ENCODE measurements at regions of chr1 and their contacts with region 1.

Region 1: DNA sequence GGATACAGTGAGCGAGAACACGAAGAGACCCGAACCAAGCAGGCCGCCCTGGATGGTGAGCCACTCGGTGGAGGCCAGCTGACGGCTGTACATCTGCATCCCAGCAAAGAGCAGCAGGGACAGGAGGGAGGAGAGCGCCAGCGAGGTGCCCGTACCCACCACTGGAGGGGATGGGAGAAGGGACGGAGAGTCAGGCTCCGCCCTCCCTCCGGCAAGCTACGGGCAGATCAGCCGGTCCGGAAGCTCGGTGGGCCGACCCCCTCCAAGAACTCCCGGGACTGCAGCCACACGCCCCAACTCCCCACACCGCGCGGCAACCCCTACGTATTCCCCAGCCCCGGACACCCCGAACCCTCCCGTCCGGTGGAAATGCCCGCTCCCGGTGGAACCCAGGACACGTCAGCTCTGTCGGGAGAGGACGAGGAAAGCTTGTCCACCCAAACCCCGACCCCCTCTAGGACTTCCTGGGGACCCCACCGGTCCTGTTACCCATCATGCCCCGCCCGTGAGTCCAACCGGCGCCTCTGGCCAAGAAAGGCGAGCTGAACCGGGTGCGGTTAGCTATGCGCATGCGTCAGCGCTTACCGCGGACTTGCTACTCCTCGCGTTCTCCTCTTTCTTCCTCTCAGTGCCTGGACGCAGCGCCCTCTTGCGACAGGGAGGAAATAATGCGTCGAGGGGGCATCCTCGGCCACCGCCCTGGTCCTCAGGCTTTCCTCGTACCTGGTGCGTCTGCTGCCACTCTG is at the start of gene KRTCAP2:
- DNase-seq: peak; percentile 95 to 97 (median 96)
- H3K4me3 ChIP-seq: peak within 1 kb of the TSS; percentile 77 to 95 (median 88)
- H3K27ac ChIP-seq: peak within 1 kb of the TSS; percentile 84 to 93
- H3K4me1 ChIP-seq: peaks cover 0 to 47% (median 41%) of the 10 kb centered on the region in 4 experiments
- H3K27me3 ChIP-seq: no peaks in the 10 kb centered on the region

Region 2: DNA sequence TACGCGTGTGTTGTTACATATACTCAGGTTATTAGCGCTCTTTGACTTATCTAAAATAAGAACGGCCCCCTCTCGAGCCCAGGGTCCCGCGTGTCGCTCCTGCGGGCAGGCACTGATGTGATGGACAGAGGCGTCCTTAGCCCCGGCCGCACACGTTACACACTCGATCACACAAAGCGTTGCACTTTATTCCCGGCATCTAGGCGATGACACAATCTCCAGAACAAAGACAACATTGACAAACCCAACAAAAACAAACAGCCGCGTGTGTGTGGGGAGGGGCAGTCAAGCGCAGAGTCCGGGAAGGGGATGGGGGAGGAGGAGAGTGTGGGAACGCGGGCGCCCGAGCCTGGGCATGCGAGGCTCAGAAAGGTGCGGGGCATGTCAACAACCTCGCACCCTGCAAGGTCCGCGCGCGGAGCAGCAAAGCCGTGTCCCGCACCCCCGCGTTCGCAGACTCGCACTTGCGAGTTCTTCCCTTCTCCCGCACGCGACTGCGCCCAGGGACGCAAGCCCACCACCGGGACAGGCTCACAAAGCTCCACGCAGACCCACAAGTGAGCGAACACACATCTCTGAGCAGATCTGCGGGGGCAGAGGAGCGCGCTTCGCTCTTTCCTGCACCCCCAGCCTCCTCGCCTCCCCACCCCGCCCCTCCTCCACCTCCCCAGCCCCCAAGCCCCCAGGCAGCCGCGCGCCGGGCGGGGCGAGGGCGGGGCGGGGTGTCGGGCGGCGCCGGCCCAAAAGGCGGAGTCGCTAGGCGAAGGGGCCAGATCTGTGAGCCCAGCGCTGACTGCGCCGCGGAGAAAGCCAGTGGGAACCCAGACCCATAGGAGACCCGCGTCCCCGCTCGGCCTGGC is 45.6 kb before region 1 on chr1 and contains the start of gene EFNA1:
- CTCF ChIA-PET with region 1: interaction called, 52 read pairs
- POLR2A ChIA-PET with region 1: interaction called, 8 read pairs
- DNase-seq: peak in 2 of 3 donors; percentile 42 to 56
- H3K4me3 ChIP-seq: peak within 1 kb of the TSS; percentile 47 to 89 (median 82)
- H3K27ac ChIP-seq: peak within 1 kb of the TSS in 1 of 2 experiments; percentile 78
- H3K4me1 ChIP-seq: peaks cover 9 to 54% (median 49%) of the 10 kb centered on the region in 4 experiments
- H3K27me3 ChIP-seq: peaks cover 0 to 9% (median 3%) of the 10 kb centered on the region in 5 experiments

Region 3: DNA sequence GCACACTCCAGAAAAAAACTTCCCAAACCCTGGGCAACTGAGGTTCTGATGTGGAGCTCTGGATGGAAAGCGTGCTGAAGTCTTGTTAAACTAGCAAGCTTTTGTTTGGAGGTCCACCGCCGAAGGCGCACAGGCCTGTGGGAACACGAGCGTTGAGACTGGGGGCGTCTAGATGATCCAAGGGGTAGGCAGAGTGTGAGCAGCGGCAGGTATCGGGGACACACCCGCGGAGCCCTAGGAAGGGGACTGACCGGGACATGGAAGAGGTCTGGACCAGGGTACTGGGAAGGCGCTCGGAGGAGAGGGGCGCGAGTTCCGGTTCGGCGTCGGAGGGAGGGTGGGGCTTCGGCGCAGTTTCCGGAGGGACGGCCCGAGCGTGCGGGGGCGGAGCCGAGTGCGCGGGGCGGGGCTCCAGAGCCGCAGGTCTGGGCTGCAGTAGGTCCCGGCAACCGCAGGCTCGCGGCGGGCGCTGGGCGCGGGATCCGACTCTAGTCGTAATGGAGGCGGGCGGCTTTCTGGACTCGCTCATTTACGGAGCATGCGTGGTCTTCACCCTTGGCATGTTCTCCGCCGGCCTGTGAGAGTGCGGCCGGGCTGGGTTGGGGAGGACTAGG is 37.4 kb before region 1 on chr1 and contains the start of gene SLC50A1:
- CTCF ChIA-PET with region 1: interaction called, 52 read pairs
- POLR2A ChIA-PET with region 1: interaction called, 8 read pairs
- DNase-seq: peak; percentile 95 to 96 (median 96)
- H3K4me3 ChIP-seq: peak within 1 kb of the TSS; percentile 47 to 89 (median 76)
- H3K27ac ChIP-seq: peak within 1 kb of the TSS; percentile 97 to 98
- H3K4me1 ChIP-seq: peaks cover 16 to 51% (median 45%) of the 10 kb centered on the region in 4 experiments
- H3K27me3 ChIP-seq: no peaks in the 10 kb centered on the region

Region 4: DNA sequence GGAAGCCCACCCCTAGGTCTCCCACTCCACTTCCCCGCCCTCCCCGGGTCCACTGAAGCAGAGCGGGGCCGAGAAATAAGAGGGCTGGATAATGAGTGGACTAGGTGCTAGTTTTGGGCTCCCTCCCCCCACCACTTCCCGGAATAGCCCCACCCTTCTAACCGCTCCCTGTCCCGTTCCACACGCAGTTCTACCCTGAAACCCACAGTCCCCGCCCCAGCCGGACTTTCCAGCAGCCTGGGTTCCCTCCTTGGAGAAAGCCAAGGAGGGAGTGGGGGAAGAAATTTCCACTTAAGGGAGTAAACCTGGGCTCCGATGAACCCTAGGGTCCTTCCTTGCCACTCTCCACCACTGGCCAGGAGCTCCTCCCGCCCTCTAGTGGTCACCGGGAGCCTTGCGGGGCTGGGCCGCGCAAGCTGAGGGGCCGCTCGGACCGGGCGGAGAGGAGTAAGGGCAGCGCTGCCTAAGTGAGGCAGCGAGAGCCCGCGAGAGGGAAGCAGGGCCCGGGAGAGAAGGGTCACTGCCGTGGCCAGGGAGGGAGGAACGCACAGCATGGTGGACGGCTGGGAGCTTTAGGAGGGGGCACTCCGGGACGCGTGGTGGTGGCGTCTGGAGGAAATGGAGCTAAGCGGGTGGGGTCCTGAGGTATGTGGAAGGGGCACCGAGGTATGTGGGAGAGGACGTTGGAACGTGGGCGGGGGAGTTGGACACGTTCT is 20.5 kb after region 1 on chr1:
- CTCF ChIA-PET with region 1: interaction called, 130 read pairs
- POLR2A ChIA-PET with region 1: interaction called, 8 read pairs
- DNase-seq: peak; percentile 79 to 84 (median 81)
- H3K4me3 ChIP-seq: peak overlapping the region; percentile 51 to 86 (median 74)
- H3K27ac ChIP-seq: peak overlapping the region; percentile 66 to 84
- H3K4me1 ChIP-seq: peaks cover 0 to 35% (median 32%) of the 10 kb centered on the region in 4 experiments
- H3K27me3 ChIP-seq: no peaks in the 10 kb centered on the region

Region 5: DNA sequence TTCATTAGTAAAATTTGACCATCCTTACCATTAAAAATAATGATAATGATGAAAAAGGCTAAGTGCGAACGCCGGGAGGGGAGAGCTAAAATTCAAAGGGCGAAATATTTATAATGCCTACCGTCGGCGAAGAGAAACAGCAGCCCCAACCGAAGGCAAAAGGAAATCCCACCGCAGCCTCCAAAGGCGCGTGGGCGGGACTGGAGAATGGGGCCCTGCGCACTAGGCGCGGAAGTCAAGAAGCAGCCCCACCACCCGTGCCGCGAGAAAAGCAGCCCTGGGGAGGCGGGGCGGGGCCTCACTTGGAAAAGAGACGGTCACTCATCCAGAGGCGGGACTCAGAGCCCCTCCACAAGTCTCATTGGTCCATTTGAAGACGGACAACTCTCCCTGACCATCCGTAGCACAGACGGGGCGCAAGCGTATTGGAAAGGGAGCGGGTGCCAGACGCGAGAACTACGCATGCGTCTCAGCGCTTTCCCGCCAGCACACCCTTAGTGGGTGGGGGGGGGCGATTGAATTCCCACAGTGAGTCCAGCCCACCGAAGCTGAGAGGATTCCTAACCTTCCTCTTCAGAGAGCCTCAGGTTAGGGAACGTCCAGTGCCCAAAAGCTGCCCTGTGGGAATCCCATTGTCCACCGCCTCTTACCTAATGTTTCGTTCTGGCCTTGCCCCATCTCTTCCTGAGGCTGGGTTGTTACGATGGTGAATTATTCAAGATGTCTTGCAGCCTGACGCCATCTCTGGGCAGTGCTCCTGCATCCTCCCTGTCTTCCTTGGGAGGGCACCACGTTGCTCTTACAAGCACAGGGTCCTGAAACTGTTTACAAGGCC is 54.6 kb after region 1 on chr1:
- CTCF ChIA-PET with region 1: interaction called, 68 read pairs
- POLR2A ChIA-PET with region 1: interaction called, 3 read pairs
- DNase-seq: peak; percentile 96 to 100 (median 99)
- H3K4me3 ChIP-seq: peak overlapping the region in 6 of 7 experiments; percentile 68 to 85 (median 76)
- H3K27ac ChIP-seq: peak overlapping the region; percentile 74 to 85
- H3K4me1 ChIP-seq: peaks cover 8 to 43% (median 37%) of the 10 kb centered on the region in 4 experiments
- H3K27me3 ChIP-seq: no peaks in the 10 kb centered on the region